ENCODE measurements at regions of chr6 and their contacts with region 1.

Region 1: GRCh38 chr6:41936073-41936837 is 5.4 kb downstream of the CCND3 start:
- DNase-seq: peak; percentile 93
- H3K4me3 Mint-ChIP-seq: no peak overlapping the region
- H3K27ac Mint-ChIP-seq: peak overlapping the region; percentile 25
- H3K4me1 Mint-ChIP-seq: peaks cover 31% of the 10 kb centered on the region
- H3K27me3 Mint-ChIP-seq: no peaks in the 10 kb centered on the region
- CTCF ChIP-seq: peak; percentile 76

Region 2: GRCh38 chr6:41659935-41660505 is 276.2 kb before region 1 on chr6:
- CTCF ChIA-PET with region 1: no interaction called
- POLR2A ChIA-PET with region 1: no interaction called
- intact Hi-C with region 1: no loop called
- DNase-seq: no peak
- H3K4me3 Mint-ChIP-seq: no peak overlapping the region
- H3K27ac Mint-ChIP-seq: no peak overlapping the region
- H3K4me1 Mint-ChIP-seq: no peaks in the 10 kb centered on the region
- H3K27me3 Mint-ChIP-seq: peaks cover 69% of the 10 kb centered on the region
- CTCF ChIP-seq: no peak

Region 3: DNA sequence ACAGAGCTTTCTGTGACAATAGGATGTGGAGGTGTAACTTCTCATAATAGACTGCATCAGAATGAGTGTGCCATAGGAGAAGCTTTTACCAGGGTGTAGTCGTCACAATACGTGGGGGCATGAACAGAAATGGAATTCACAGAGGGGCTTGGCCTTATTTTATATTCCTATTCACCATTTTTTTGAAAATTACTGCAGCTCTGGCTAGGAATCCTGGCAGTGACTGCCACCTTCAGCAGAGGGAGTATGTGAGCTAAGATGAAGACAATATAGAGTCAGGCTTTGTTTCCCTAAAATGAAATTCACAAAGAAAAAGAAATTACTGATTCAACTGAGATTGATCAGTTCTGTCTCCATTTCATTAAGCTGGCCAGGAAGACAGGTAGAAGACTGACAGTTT is 134.9 kb before region 1 on chr6:
- CTCF ChIA-PET with region 1: interaction called, 9 read pairs
- POLR2A ChIA-PET with region 1: interaction called, 6 read pairs
- intact Hi-C with region 1: loop called (anchors 1 kb)
- DNase-seq: peak; percentile 44
- H3K4me3 Mint-ChIP-seq: no peak overlapping the region
- H3K27ac Mint-ChIP-seq: no peak overlapping the region
- H3K4me1 Mint-ChIP-seq: peaks cover 5% of the 10 kb centered on the region
- H3K27me3 Mint-ChIP-seq: no peaks in the 10 kb centered on the region
- CTCF ChIP-seq: peak; percentile 55

Region 4: GRCh38 chr6:41846666-41847237 is 89.5 kb before region 1 on chr6:
- CTCF ChIA-PET with region 1: interaction called, 28 read pairs
- POLR2A ChIA-PET with region 1: interaction called, 11 read pairs
- intact Hi-C with region 1: loop called (anchors 1 kb)
- DNase-seq: peak; percentile 97
- H3K4me3 Mint-ChIP-seq: no peak overlapping the region
- H3K27ac Mint-ChIP-seq: peak overlapping the region; percentile 49
- H3K4me1 Mint-ChIP-seq: peaks cover 12% of the 10 kb centered on the region
- H3K27me3 Mint-ChIP-seq: no peaks in the 10 kb centered on the region
- CTCF ChIP-seq: peak; percentile 79

Region 5: GRCh38 chr6:41895300-41896233 is 40.7 kb before region 1 on chr6 and contains the start of gene USP49:
- CTCF ChIA-PET with region 1: interaction called, 4 read pairs
- POLR2A ChIA-PET with region 1: interaction called, 3 read pairs
- intact Hi-C with region 1: loop called (anchors 1 kb)
- DNase-seq: peak; percentile 77
- H3K4me3 Mint-ChIP-seq: no peak within 1 kb of the TSS
- H3K27ac Mint-ChIP-seq: no peak within 1 kb of the TSS
- H3K4me1 Mint-ChIP-seq: peaks cover 9% of the 10 kb centered on the region
- H3K27me3 Mint-ChIP-seq: no peaks in the 10 kb centered on the region
- CTCF ChIP-seq: no peak
- total RNA-seq, gene USP49: 4.1 and 4.3 TPM in 2 replicates

Region 6: DNA sequence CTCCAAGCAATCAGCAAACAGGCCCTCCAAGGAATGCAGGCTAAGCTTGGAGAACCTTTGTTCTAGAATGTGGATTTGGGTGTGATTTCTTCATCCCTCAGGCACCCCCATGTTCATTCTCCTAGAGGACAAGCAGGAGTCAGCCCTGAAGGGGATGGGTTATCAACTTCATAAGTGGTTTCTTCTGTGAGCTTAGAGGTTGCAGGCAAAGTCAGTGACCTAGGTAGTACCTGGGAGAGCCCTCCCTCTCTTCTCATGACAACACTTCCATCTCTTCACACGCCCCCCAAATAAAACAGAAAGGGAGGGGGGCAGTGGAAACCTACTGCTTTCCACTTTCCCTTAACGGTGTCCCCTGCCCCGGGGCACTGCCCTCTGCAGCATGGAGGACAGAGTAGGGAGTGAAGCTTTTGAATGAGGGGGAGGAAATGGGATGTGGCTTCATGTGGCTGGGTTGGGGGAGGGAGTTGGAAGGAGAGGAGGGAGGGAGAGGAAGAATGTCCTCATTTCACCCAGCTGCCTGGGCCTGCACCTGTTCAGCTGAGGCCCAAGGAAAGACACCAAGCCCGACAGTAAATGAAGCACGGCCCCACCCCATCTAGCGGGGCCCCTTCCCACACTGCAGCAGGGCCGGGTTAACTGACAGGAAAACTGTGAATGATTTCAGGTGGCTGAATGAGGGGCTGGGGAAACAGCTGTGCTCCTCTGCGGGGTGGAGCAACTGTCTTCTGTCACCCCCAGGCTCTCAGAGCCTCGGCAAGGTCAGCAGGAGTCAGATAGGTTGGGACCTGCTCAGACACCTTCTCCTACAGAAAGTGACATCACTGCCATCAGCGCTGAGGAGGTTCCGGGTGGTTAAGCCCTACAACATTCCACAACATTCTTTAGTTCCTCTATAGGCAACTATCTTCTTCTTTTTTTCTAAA is 74.0 kb after region 1 on chr6:
- CTCF ChIA-PET with region 1: no interaction called
- POLR2A ChIA-PET with region 1: no interaction called
- intact Hi-C with region 1: no loop called
- DNase-seq: no peak
- H3K4me3 Mint-ChIP-seq: no peak overlapping the region
- H3K27ac Mint-ChIP-seq: no peak overlapping the region
- H3K4me1 Mint-ChIP-seq: no peaks in the 10 kb centered on the region
- H3K27me3 Mint-ChIP-seq: no peaks in the 10 kb centered on the region
- CTCF ChIP-seq: no peak

Region 7: DNA sequence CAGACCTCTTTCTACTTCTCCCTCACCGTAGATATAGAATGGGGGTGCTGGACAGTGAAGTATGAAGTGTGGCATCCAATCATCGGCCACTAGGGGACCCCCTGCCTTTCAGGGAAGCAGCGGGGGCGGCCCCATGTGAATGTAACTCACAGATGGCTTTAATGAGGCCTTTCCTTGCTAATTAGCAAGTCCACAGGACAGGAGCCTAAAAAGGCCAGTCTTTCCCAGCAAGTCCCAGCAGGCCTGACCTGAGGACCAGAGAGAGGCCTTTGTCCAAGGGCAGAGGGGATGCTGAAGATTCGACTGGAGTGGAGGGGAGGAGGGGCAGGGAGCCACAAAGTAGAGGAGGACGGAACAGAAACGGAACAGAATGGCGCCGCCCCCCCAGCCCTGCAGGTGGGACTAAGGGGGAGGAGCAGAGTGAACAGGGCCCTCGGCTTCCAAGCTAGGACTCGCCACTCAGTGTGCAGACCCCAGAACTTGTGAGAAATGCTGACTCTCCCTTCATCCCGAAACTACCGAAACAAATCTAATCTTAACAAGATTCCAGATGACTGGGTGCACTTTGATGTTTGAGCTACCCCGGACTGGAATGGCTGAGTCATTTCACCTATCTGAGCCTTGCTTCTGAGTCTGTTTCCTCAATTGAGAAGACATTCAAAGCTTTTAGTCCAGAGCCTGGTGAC is 200.4 kb after region 1 on chr6:
- CTCF ChIA-PET with region 1: no interaction called
- POLR2A ChIA-PET with region 1: no interaction called
- intact Hi-C with region 1: no loop called
- DNase-seq: peak; percentile 53
- H3K4me3 Mint-ChIP-seq: no peak overlapping the region
- H3K27ac Mint-ChIP-seq: peak overlapping the region; percentile 88
- H3K4me1 Mint-ChIP-seq: peaks cover 32% of the 10 kb centered on the region
- H3K27me3 Mint-ChIP-seq: no peaks in the 10 kb centered on the region
- CTCF ChIP-seq: no peak

Measured in MCF 10A (cell line).